ENCODE measurements at regions of chr15 and their contacts with region 1.

Region 1: GRCh38 chr15:91238644-91239425 is 138.8 kb downstream of the SV2B start:
- DNase-seq: peak in 1 of 10 donors; percentile 38
- H3K4me3 ChIP-seq: peak overlapping the region in 45 of 59 donors; percentile 5 to 58 (median 31)
- H3K27ac ChIP-seq: peak overlapping the region in 29 of 59 donors; percentile 1 to 72 (median 30)
- H3K27me3 ChIP-seq: peaks cover 0 to 2% (median 0%) of the 10 kb centered on the region in 45 donors
- CTCF ChIP-seq: no peak

Region 2: DNA sequence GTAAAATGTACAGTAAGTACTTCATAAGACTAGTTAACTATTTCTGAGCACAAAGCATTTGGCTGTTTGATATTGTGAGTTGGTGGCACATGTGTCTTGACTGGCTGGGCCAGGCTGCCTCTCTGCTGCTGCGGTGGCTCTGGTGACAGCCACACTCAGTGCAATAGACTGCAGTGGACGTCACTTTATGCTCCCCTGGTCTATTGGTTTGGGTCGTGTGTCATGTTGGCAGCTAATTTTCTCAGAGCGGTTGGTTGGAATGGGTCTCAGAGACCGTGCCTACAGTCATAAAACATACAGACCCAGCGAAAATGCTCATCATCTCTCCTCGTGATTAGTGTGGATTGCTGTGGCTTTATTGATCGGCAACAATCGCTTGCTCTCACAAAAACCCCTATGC is 67.5 kb before region 1 on chr15:
- intact Hi-C with region 1: loop called in 1 of 2 experiments (anchors 10 kb)
- DNase-seq: no peak
- H3K4me3 ChIP-seq: no peak overlapping the region
- H3K27ac ChIP-seq: peak overlapping the region in 5 of 59 donors; percentile 7 to 40 (median 21)
- H3K27me3 ChIP-seq: no peaks in the 10 kb centered on the region
- CTCF ChIP-seq: no peak